ENCODE measurements at regions of chr20 and their contacts with region 1.

Region 1: DNA sequence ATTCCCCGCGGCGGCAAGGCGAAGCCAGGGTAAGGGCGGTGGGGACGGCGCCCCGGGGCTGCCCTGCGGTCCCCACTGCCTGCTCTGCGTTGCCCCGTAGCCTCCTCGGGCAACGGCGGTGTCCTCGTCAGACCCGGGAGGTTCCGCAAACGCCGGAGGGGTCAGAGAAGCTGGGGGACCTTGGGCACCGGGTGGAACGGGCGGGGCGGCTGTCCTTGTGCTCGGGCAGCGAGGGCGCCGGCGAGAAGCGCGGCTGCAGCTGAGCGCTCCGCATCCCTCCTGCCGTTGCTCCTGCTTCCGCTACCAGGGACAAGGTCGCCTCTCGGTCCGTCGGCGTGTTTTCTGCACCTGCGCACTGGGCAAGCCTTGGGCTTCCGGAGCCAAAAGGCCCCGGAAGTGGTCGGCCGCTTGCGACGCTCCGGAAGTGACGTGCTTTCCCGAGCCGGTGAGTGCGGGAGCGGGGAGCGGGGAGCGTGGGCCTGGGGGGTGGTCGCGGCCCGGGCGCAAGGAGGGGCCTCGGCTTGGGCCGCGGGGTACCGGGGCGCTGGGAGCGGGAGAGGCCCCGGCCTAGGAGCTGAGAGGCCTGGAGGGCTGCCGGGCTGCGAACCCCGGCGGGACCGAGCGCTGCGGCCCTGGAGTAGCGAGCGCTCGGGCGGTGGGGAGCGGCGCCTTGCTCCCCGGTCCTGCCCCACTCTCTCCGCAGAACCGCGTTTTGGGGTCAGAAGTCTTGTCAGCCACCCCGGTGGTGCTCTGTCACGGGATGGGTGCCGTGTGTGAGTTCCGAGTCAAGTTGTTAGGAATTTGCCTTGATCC is at the start of gene MTG2:
- DNase-seq: peak; percentile 87
- ATAC-seq: peak; percentile 92
- H3K4me3 Mint-ChIP-seq: peak within 1 kb of the TSS; percentile 92
- H3K27ac Mint-ChIP-seq: peak within 1 kb of the TSS; percentile 92
- H3K4me1 Mint-ChIP-seq: peaks cover 43% of the 10 kb centered on the region
- H3K27me3 Mint-ChIP-seq: no peaks in the 10 kb centered on the region
- CTCF ChIP-seq: no peak
- total RNA-seq, gene MTG2: 40.8 and 46.8 TPM in 2 replicates

Region 2: GRCh38 chr20:62143118-62143973 is 39.5 kb before region 1 on chr20 and contains the starts of genes PSMA7 and SS18L1:
- CTCF ChIA-PET with region 1: no interaction called
- POLR2A ChIA-PET with region 1: interaction called, 5 read pairs
- intact Hi-C with region 1: loop called (anchors 1 kb)
- DNase-seq: peak; percentile 88
- ATAC-seq: peak; percentile 89
- H3K4me3 Mint-ChIP-seq: peak within 1 kb of the TSS; percentile 89
- H3K27ac Mint-ChIP-seq: peak within 1 kb of the TSS; percentile 78
- H3K4me1 Mint-ChIP-seq: peaks cover 36% of the 10 kb centered on the region
- H3K27me3 Mint-ChIP-seq: no peaks in the 10 kb centered on the region
- CTCF ChIP-seq: no peak
- total RNA-seq, gene PSMA7: 241 and 260 TPM in 2 replicates
- total RNA-seq, gene SS18L1: 9.0 and 9.1 TPM in 2 replicates

Region 3: DNA sequence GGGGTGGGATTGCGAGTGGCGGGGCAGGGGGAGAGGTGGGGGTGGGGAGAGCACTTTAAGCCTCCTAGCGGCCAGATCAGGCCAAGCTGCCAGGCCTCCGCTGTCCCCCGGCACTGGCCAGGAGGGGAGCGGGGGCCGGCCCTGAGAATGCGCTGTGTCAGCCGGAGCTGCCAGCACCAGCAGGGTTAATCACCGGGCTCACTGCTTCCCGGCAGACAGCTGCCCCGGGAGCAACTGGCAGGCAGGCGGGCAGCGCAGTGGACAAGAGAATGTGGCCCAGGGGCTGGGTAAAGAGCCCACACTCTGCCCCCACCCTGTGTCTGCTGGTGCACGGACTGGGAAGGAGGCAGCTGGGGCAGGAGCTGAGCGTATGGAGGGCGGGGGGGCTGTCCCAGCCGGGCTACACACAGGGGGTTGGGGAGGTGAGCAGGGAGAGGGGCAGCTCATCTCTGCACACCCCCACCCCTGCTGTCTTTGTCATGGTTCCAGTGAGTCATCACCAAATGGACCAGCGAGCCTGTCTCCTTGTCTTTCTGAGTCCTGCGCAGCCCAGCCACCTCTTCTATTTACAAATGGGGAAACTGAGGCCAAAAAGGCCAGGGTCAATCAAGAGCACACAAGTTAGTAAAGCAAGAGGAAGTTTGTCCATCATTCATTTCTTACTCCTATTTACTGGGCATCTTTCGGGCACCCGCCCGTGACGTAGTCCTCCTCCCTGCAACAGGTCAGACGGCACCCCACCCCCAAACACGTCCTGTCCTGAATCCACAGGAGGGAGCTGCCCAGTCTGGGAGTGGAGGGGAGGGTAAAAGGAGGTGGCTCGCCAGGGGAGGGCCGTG is 186.4 kb after region 1 on chr20:
- CTCF ChIA-PET with region 1: no interaction called
- POLR2A ChIA-PET with region 1: no interaction called
- intact Hi-C with region 1: loop called (anchors 5 kb)
- DNase-seq: no peak
- ATAC-seq: no peak
- H3K4me3 Mint-ChIP-seq: no peak overlapping the region
- H3K27ac Mint-ChIP-seq: no peak overlapping the region
- H3K4me1 Mint-ChIP-seq: peaks cover 16% of the 10 kb centered on the region
- H3K27me3 Mint-ChIP-seq: peaks cover 2% of the 10 kb centered on the region
- CTCF ChIP-seq: no peak